H1 (cell line): ENCODE measurements at regions of chr10 and their contacts with region 1.

Region 1: GRCh38 chr10:117496616-117497028 is 45.9 kb upstream of the EMX2 start:
- DNase-seq: peak; percentile 63 to 93
- H3K4me3 ChIP-seq: no peak overlapping the region
- H3K27ac ChIP-seq: no peak overlapping the region
- H3K4me1 ChIP-seq: peaks cover 0 to 3% (median 1%) of the 10 kb centered on the region in 4 experiments; a peak in 2 of 7 replicates
- H3K27me3 ChIP-seq: peaks cover 0 to 6% (median under 1%) of the 10 kb centered on the region in 4 experiments; a peak in 2 of 7 replicates
- CTCF ChIP-seq: peak; percentile 90 to 95 (median 92)
- EP300 ChIP-seq: peak in 1 of 2 experiments; percentile 41; a peak in 1 of 3 replicates
- POLR2A ChIP-seq: no peak
- RAD21 ChIP-seq: peak; percentile 99

Region 2: GRCh38 chr10:117327262-117327661 is 169.4 kb before region 1 on chr10:
- CTCF ChIA-PET with region 1: no interaction called
- POLR2A ChIA-PET with region 1: no interaction called
- DNase-seq: no peak
- H3K4me3 ChIP-seq: peak overlapping the region in 1 of 4 experiments; percentile 12; a peak in 1 of 8 replicates
- H3K27ac ChIP-seq: no peak overlapping the region
- H3K4me1 ChIP-seq: peaks cover 0 to 19% (median 8%) of the 10 kb centered on the region in 4 experiments; a peak in 4 of 7 replicates
- H3K27me3 ChIP-seq: no peaks in the 10 kb centered on the region
- CTCF ChIP-seq: no peak
- EP300 ChIP-seq: no peak
- POLR2A ChIP-seq: no peak
- RAD21 ChIP-seq: no peak

Region 3: GRCh38 chr10:117480097-117480496 is 16.5 kb before region 1 on chr10:
- CTCF ChIA-PET with region 1: interaction called, 10 read pairs
- POLR2A ChIA-PET with region 1: no interaction called
- DNase-seq: no peak
- H3K4me3 ChIP-seq: no peak overlapping the region
- H3K27ac ChIP-seq: no peak overlapping the region
- H3K4me1 ChIP-seq: 0 out of 7 replicates have a peak, but pooled peaks cover 0 to 1% (median 0%) of the 10 kb centered on the region in 4 experiments
- H3K27me3 ChIP-seq: peaks cover 0 to 2% (median 0%) of the 10 kb centered on the region in 4 experiments; a peak in 3 of 7 replicates
- CTCF ChIP-seq: no peak
- EP300 ChIP-seq: no peak
- POLR2A ChIP-seq: no peak
- RAD21 ChIP-seq: no peak